Naive thymus-derived CD4-positive, alpha-beta T cell (primary cell): ENCODE measurements at regions of chr12 and their contacts with region 1.

Region 1: GRCh38 chr12:112409064-112409905 is at the start of gene RPL6:
- DNase-seq: peak; percentile 61 to 88 (median 84)
- ATAC-seq: peak; percentile 94
- H3K4me3 ChIP-seq: peak within 1 kb of the TSS; percentile 93
- H3K4me3 Mint-ChIP-seq: peak within 1 kb of the TSS; percentile 97 to 100 (median 100)
- H3K27ac ChIP-seq: peak within 1 kb of the TSS; percentile 84
- H3K27ac Mint-ChIP-seq: peak within 1 kb of the TSS; percentile 99 to 100 (median 100)
- H3K4me1 ChIP-seq: peaks cover 18 to 20% of the 10 kb centered on the region in 2 donors
- H3K4me1 Mint-ChIP-seq: peaks cover 17 to 48% (median 36%) of the 10 kb centered on the region in 7 donors
- H3K27me3 ChIP-seq: no peaks in the 10 kb centered on the region
- H3K27me3 Mint-ChIP-seq: no peaks in the 10 kb centered on the region
- total RNA-seq, gene RPL6: 1,134 to 1,668 (median 1,601) TPM

Region 2: GRCh38 chr12:111368788-111369495 is 1040.3 kb before region 1 on chr12 and contains the start of gene PHETA1:
- CTCF ChIA-PET with region 1: no interaction called
- POLR2A ChIA-PET with region 1: no interaction called
- intact Hi-C with region 1: loop called in 1 of 2 experiments (anchors 5 kb)
- DNase-seq: peak; percentile 34 to 88 (median 55)
- ATAC-seq: peak; percentile 96
- H3K4me3 ChIP-seq: peak within 1 kb of the TSS; percentile 81
- H3K4me3 Mint-ChIP-seq: peak within 1 kb of the TSS; percentile 79 to 90 (median 86)
- H3K27ac ChIP-seq: peak within 1 kb of the TSS; percentile 56
- H3K27ac Mint-ChIP-seq: peak within 1 kb of the TSS in 6 of 9 donors; percentile 53 to 80 (median 67)
- H3K4me1 ChIP-seq: peaks cover 14 to 19% of the 10 kb centered on the region in 2 donors
- H3K4me1 Mint-ChIP-seq: peaks cover 15 to 32% (median 24%) of the 10 kb centered on the region in 7 donors
- H3K27me3 ChIP-seq: no peaks in the 10 kb centered on the region
- H3K27me3 Mint-ChIP-seq: peaks cover 0 to 26% (median 0%) of the 10 kb centered on the region in 5 donors
- total RNA-seq, gene PHETA1: 1.2 to 6.8 (median 5.4) TPM

Region 3: GRCh38 chr12:111942557-111942956 is 466.7 kb before region 1 on chr12:
- CTCF ChIA-PET with region 1: interaction called, 3 read pairs
- POLR2A ChIA-PET with region 1: no interaction called
- intact Hi-C with region 1: loop called in 1 of 2 experiments (anchors 1 kb)
- DNase-seq: no peak
- ATAC-seq: no peak
- H3K4me3 ChIP-seq: no peak overlapping the region
- H3K4me3 Mint-ChIP-seq: no peak overlapping the region
- H3K27ac ChIP-seq: no peak overlapping the region
- H3K27ac Mint-ChIP-seq: no peak overlapping the region
- H3K4me1 ChIP-seq: peaks cover 0 to 3% of the 10 kb centered on the region in 2 donors
- H3K4me1 Mint-ChIP-seq: peaks cover 0 to 25% (median 12%) of the 10 kb centered on the region in 7 donors
- H3K27me3 ChIP-seq: no peaks in the 10 kb centered on the region
- H3K27me3 Mint-ChIP-seq: no peaks in the 10 kb centered on the region

Region 4: DNA sequence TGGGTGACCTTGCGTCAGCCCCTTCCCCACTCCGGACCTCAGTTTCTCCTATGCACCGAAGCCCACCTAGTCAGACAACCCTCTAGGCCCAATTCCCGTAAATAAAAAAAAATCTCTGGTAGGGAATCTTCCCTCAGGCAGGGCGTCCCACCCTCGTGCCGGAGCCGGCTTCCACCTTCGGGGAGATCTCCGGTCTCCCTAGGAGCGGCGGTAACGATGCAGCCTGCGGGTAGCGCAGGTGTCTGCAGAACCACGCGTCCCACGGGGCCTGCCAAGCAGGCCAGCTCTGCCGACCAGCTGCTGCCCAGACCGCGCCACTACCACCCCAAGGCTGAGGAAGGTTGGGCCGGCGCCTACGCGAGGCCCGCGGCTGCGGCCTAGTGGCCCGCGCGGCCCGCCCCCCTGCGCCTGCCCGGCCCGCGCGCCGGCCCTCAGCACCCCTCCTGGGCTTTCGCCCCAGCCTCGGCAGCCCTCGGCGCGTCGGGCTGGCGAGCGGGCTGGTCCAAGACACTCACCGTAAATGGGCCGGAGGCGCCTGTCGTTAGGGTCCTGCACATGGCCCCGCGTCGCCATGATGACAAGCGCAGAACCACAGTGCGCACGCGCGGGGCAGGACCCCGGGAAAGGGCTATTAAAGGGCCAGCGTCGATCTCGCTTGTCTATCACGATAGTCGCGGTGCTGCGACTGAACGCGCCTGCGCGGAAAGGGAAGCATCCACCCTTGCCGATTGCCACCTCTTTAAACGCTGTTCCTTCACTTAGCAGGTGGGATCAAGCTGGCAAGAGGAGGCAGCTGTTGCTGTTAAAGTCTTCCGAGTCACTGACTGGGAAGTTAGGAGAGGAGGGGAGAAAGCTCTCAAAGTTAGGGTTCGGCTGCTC is 300.8 kb before region 1 on chr12 and contains the start of gene NAA25:
- CTCF ChIA-PET with region 1: interaction called, 3 read pairs
- POLR2A ChIA-PET with region 1: interaction called, 5 read pairs
- intact Hi-C with region 1: loop called (anchors 1 to 2 kb)
- DNase-seq: peak; percentile 79 to 90 (median 86)
- ATAC-seq: peak; percentile 92
- H3K4me3 ChIP-seq: peak within 1 kb of the TSS; percentile 100
- H3K4me3 Mint-ChIP-seq: peak within 1 kb of the TSS; percentile 96 to 99 (median 98)
- H3K27ac ChIP-seq: peak within 1 kb of the TSS; percentile 92
- H3K27ac Mint-ChIP-seq: peak within 1 kb of the TSS; percentile 93 to 98 (median 97)
- H3K4me1 ChIP-seq: peaks cover 12 to 22% of the 10 kb centered on the region in 2 donors
- H3K4me1 Mint-ChIP-seq: peaks cover 27 to 53% (median 45%) of the 10 kb centered on the region in 7 donors
- H3K27me3 ChIP-seq: no peaks in the 10 kb centered on the region
- H3K27me3 Mint-ChIP-seq: no peaks in the 10 kb centered on the region
- total RNA-seq, gene NAA25: 39.1 to 43.0 (median 42.1) TPM

Region 5: GRCh38 chr12:112198120-112198733 is 211.1 kb before region 1 on chr12:
- CTCF ChIA-PET with region 1: no interaction called
- POLR2A ChIA-PET with region 1: no interaction called
- intact Hi-C with region 1: loop called in 1 of 2 experiments (anchors 1 kb)
- DNase-seq: peak in 8 of 9 donors; percentile 20 to 45 (median 34)
- ATAC-seq: peak; percentile 81
- H3K4me3 ChIP-seq: no peak overlapping the region
- H3K4me3 Mint-ChIP-seq: no peak overlapping the region
- H3K27ac ChIP-seq: no peak overlapping the region
- H3K27ac Mint-ChIP-seq: peak overlapping the region in 1 of 9 donors; percentile 29
- H3K4me1 ChIP-seq: no peaks in the 10 kb centered on the region
- H3K4me1 Mint-ChIP-seq: peaks cover 0 to 4% (median 0%) of the 10 kb centered on the region in 7 donors
- H3K27me3 ChIP-seq: no peaks in the 10 kb centered on the region
- H3K27me3 Mint-ChIP-seq: no peaks in the 10 kb centered on the region

Region 6: DNA sequence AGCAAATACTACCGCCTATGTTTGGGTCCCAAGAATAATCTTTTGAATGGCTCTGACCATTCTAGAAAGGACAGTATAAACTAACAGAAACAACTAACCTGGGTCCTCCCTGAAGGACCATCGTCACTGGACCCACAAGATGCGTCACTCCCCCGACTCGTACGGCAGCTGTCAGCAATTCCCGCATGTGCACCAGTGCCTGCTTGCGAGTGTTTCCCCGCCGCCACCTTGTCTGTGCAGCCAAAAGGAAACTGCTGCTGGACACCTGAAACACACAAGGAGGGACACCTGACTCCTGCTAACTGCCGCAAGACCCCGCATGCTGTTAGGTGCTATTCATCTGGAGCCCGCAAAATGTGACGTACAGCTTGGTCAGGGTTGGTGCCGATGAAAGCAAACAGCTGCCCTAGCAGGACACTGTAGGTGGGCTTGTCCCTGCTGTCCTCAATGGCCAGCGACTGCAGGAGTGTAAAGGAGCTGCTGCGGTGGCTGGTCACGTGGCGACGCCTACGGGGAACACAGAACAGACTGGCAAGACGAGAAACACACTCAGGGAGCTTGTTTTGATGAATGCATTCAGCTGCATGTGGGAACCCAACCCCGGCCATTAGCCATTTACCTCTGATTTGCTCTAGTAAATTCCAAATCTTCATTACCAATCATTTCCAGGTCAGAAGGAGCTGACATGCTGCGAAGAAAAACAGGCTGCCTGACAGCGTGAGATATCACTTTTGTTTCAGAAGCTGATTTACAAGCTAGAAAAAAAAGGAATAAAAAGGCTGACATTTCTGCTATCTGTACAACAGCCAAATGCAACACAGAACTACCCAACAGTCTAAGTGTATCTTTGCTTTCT is 165.8 kb before region 1 on chr12:
- CTCF ChIA-PET with region 1: no interaction called
- POLR2A ChIA-PET with region 1: no interaction called
- intact Hi-C with region 1: no loop called
- DNase-seq: no peak
- ATAC-seq: no peak
- H3K4me3 ChIP-seq: no peak overlapping the region
- H3K4me3 Mint-ChIP-seq: no peak overlapping the region
- H3K27ac ChIP-seq: no peak overlapping the region
- H3K27ac Mint-ChIP-seq: no peak overlapping the region
- H3K4me1 ChIP-seq: no peaks in the 10 kb centered on the region
- H3K4me1 Mint-ChIP-seq: no peaks in the 10 kb centered on the region
- H3K27me3 ChIP-seq: no peaks in the 10 kb centered on the region
- H3K27me3 Mint-ChIP-seq: no peaks in the 10 kb centered on the region

Region 7: GRCh38 chr12:112303004-112303403 is 106.3 kb before region 1 on chr12:
- CTCF ChIA-PET with region 1: no interaction called
- POLR2A ChIA-PET with region 1: no interaction called
- intact Hi-C with region 1: no loop called
- DNase-seq: peak in 1 of 9 donors; percentile 29
- ATAC-seq: peak; percentile 76
- H3K4me3 ChIP-seq: no peak overlapping the region
- H3K4me3 Mint-ChIP-seq: no peak overlapping the region
- H3K27ac ChIP-seq: no peak overlapping the region
- H3K27ac Mint-ChIP-seq: peak overlapping the region in 2 of 9 donors; percentile 56 to 68
- H3K4me1 ChIP-seq: no peaks in the 10 kb centered on the region
- H3K4me1 Mint-ChIP-seq: peaks cover 0 to 10% (median 0%) of the 10 kb centered on the region in 7 donors
- H3K27me3 ChIP-seq: no peaks in the 10 kb centered on the region
- H3K27me3 Mint-ChIP-seq: no peaks in the 10 kb centered on the region

Region 8: DNA sequence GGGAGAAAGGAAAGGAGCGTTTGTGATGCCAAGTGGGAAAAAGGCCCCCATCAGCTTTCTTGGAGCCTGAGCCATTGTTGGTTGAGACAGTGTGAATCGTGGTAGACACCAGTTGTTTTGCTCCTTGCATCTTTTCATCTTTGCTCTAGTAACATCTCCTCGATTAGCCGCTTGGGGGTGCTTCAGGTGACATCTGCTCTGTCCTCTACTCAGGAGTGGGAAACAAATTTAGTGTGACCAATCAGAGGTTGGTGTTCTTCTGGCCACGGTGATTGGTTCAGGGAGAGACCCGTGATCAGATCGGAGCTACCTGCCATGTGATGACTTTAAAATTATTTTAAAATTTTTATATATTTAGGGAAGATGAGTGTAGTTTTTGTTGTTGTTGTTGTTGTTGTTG is 316.1 kb after region 1 on chr12:
- CTCF ChIA-PET with region 1: no interaction called
- POLR2A ChIA-PET with region 1: no interaction called
- intact Hi-C with region 1: no loop called
- DNase-seq: no peak
- ATAC-seq: no peak
- H3K4me3 ChIP-seq: no peak overlapping the region
- H3K4me3 Mint-ChIP-seq: no peak overlapping the region
- H3K27ac ChIP-seq: no peak overlapping the region
- H3K27ac Mint-ChIP-seq: no peak overlapping the region
- H3K4me1 ChIP-seq: no peaks in the 10 kb centered on the region
- H3K4me1 Mint-ChIP-seq: no peaks in the 10 kb centered on the region
- H3K27me3 ChIP-seq: peaks cover 0 to 5% of the 10 kb centered on the region in 2 donors
- H3K27me3 Mint-ChIP-seq: peaks cover 15 to 46% (median 23%) of the 10 kb centered on the region in 5 donors

Region 9: GRCh38 chr12:112937741-112938719 is 528.7 kb after region 1 on chr12 and contains the start of gene OAS3:
- CTCF ChIA-PET with region 1: no interaction called
- POLR2A ChIA-PET with region 1: no interaction called
- intact Hi-C with region 1: no loop called
- DNase-seq: peak; percentile 31 to 79 (median 50)
- ATAC-seq: peak; percentile 84
- H3K4me3 ChIP-seq: peak within 1 kb of the TSS; percentile 78
- H3K4me3 Mint-ChIP-seq: peak within 1 kb of the TSS; percentile 85 to 100 (median 93)
- H3K27ac ChIP-seq: peak within 1 kb of the TSS; percentile 82
- H3K27ac Mint-ChIP-seq: peak within 1 kb of the TSS; percentile 90 to 97 (median 95)
- H3K4me1 ChIP-seq: peaks cover 18 to 19% of the 10 kb centered on the region in 2 donors
- H3K4me1 Mint-ChIP-seq: peaks cover 22 to 61% (median 31%) of the 10 kb centered on the region in 7 donors
- H3K27me3 ChIP-seq: no peaks in the 10 kb centered on the region
- H3K27me3 Mint-ChIP-seq: no peaks in the 10 kb centered on the region
- total RNA-seq, gene OAS3: 17.8 to 264 (median 21.6) TPM